IMR-90 (cell line): ENCODE measurements at regions of chr1 and their contacts with region 1.

Region 1: DNA sequence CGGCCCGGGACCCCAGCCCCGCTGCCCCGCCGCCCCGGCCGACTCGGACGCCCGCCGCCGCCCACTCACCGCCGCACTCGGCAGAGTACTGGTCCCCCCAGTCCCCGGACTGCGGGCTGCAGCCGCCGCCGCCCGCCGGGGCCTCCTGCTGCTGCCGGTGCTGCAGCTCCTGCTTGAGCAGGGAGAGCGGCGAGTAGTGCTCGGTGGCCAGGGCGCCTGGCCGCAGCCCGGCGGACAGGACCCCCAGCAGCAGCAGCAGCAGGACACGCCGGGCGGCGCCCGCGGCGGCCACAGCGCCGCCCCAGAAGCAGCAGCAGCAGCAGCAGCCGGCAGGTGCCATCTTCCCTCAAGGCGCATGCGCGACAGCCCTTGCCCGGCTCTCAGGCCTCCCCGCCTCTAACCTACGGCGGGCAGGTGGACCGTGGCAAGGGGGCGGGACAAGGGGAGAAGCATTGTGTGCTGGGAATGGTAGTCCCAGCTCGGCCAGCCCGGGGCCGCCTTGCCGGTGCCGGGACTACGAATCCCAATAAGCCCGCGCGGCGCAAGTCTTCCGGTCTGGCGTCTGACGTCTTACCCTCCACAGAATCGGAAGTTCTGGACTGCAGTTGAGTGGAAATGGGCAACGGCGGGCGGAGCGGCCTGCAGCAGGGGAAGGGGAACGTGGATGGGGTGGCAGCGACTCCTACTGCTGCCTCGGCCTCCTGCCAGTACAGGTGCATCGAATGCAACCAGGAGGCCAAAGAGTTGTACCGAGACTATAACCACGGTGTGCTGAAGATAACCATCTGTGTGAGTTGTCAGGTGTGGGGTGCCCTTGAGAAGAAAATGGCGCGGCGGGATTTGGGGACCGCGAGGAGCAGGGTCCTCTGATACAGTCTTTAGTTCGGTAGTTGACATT is at the starts of genes ARV1 and TTC13:
- DNase-seq: peak; percentile 98
- ATAC-seq: peak; percentile 99
- H3K4me3 ChIP-seq: peak within 1 kb of the TSS; percentile 68
- H3K27ac ChIP-seq: peak within 1 kb of the TSS; percentile 71
- H3K4me1 ChIP-seq: peaks cover 6% of the 10 kb centered on the region
- H3K27me3 ChIP-seq: no peaks in the 10 kb centered on the region
- CTCF ChIP-seq: peak; percentile 13; the same call in 1 of the 2 replicates
- POLR2A ChIP-seq: 0 out of 2 replicates have a peak, but pooled peaks have one; percentile 26
- RAD21 ChIP-seq: peak; percentile 25
- total RNA-seq, gene ARV1: 19.0 and 26.7 TPM in 2 replicates
- total RNA-seq, gene TTC13: 8.9 and 9.1 TPM in 2 replicates

Region 2: DNA sequence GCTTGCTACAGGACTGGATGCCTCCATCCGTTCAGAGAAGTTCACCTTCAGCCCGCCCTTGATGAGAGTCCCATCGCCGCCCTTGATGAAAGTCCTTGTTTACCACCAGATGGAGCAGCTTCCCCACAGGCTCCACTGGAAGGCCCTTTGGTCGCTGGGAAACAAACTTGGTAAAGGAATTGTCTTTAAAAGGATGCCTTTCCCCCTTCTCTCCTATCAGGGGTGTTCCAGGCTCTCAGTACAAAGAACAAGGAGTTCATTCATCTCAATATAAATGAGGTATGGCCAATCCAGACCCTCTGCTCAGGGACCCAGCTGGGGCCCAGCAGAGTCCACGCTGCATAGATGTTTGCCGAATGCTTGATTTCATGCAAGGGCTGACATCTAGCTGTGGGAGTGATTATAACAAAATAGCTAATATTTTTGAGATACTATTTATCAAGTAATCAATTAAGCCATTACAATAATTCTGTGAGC is 180.8 kb before region 1 on chr1:
- CTCF ChIA-PET with region 1: no interaction called
- POLR2A ChIA-PET with region 1: no interaction called
- dilution Hi-C with region 1: no loop called
- in situ Hi-C with region 1: no loop called
- intact Hi-C with region 1: loop called (anchors 2 kb)
- DNase-seq: peak; percentile 73
- ATAC-seq: peak; percentile 93
- H3K4me3 ChIP-seq: no peak overlapping the region
- H3K27ac ChIP-seq: no peak overlapping the region
- H3K4me1 ChIP-seq: no peaks in the 10 kb centered on the region
- H3K27me3 ChIP-seq: no peaks in the 10 kb centered on the region
- CTCF ChIP-seq: peak; percentile 89
- POLR2A ChIP-seq: no peak
- RAD21 ChIP-seq: peak; percentile 97

Region 3: GRCh38 chr1:230937371-230937770 is 41.4 kb before region 1 on chr1:
- CTCF ChIA-PET with region 1: interaction called, 3 read pairs
- POLR2A ChIA-PET with region 1: no interaction called
- dilution Hi-C with region 1: no loop called
- in situ Hi-C with region 1: no loop called
- intact Hi-C with region 1: loop called (anchors 5 kb)
- DNase-seq: peak; percentile 45
- ATAC-seq: peak; percentile 53
- H3K4me3 ChIP-seq: no peak overlapping the region
- H3K27ac ChIP-seq: no peak overlapping the region; the same call in 1 of the 2 replicates
- H3K4me1 ChIP-seq: peaks cover 7% of the 10 kb centered on the region
- H3K27me3 ChIP-seq: no peaks in the 10 kb centered on the region
- CTCF ChIP-seq: no peak
- POLR2A ChIP-seq: no peak
- RAD21 ChIP-seq: no peak

Region 4: GRCh38 chr1:231040019-231040799 is 61.5 kb after region 1 on chr1 and contains the start of gene FAM89A:
- CTCF ChIA-PET with region 1: no interaction called
- POLR2A ChIA-PET with region 1: interaction called, 5 read pairs
- dilution Hi-C with region 1: no loop called
- in situ Hi-C with region 1: no loop called
- intact Hi-C with region 1: loop called (anchors 2 kb)
- DNase-seq: no peak
- ATAC-seq: peak; percentile 87
- H3K4me3 ChIP-seq: peak within 1 kb of the TSS; percentile 74
- H3K27ac ChIP-seq: peak within 1 kb of the TSS; percentile 11; the same call in 1 of the 2 replicates
- H3K4me1 ChIP-seq: peaks cover 7% of the 10 kb centered on the region; the same call in 1 of the 2 replicates
- H3K27me3 ChIP-seq: peaks cover 7% of the 10 kb centered on the region; the same call in 1 of the 2 replicates
- CTCF ChIP-seq: no peak
- POLR2A ChIP-seq: no peak
- RAD21 ChIP-seq: no peak
- total RNA-seq, gene FAM89A: 6.8 and 7.5 TPM in 2 replicates